BJ (cell line): ENCODE measurements at regions of chr14 and their contacts with region 1.

Region 1: GRCh38 chr14:22570132-22570949 is 18.7 kb downstream of the DAD1 start:
- DNase-seq: no peak
- H3K4me3 ChIP-seq: no peak overlapping the region
- H3K27me3 ChIP-seq: no peaks in the 10 kb centered on the region
- CTCF ChIP-seq: peak; percentile 66

Region 2: GRCh38 chr14:22556990-22557623 is 13.2 kb before region 1 on chr14:
- CTCF ChIA-PET with region 1: interaction called, 23 read pairs
- POLR2A ChIA-PET with region 1: no interaction called
- DNase-seq: no peak
- H3K4me3 ChIP-seq: peak overlapping the region; percentile 22
- H3K27me3 ChIP-seq: no peaks in the 10 kb centered on the region
- CTCF ChIP-seq: peak; percentile 96

Region 3: GRCh38 chr14:22589096-22589839 is 18.9 kb after region 1 on chr14 and contains the start of gene DAD1:
- CTCF ChIA-PET with region 1: interaction called, 15 read pairs
- POLR2A ChIA-PET with region 1: no interaction called
- DNase-seq: peak; percentile 99
- H3K4me3 ChIP-seq: peak within 1 kb of the TSS; percentile 63
- H3K27me3 ChIP-seq: peaks cover 6% of the 10 kb centered on the region
- CTCF ChIP-seq: no peak
- polyA plus RNA-seq, gene DAD1: 383 and 576 TPM in 2 replicates

Region 4: GRCh38 chr14:22646570-22647254 is 76.4 kb after region 1 on chr14:
- CTCF ChIA-PET with region 1: interaction called, 115 read pairs
- POLR2A ChIA-PET with region 1: no interaction called
- DNase-seq: peak; percentile 78
- H3K4me3 ChIP-seq: no peak overlapping the region
- H3K27me3 ChIP-seq: no peaks in the 10 kb centered on the region
- CTCF ChIP-seq: no peak

Region 5: DNA sequence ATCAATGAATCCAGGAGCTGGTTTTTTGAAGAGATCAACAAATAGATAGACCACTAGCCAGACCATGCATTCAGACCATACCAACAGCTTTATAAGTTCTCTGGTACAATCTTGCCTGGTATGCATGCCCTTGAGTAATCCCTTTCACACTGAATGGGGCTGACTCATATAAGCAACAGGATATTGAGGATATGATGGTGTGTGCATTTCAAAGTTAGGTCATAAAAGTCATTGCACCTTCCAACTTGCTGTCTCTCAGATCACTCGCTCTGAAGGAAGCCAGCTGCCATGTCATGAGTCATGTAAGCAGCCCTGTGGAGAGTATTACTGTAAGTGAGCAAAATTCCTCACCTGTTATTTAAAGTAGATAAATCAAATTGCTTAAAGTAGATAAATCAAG is 118.8 kb after region 1 on chr14:
- CTCF ChIA-PET with region 1: interaction called, 12 read pairs
- POLR2A ChIA-PET with region 1: no interaction called
- DNase-seq: peak; percentile 58
- H3K4me3 ChIP-seq: no peak overlapping the region
- H3K27me3 ChIP-seq: no peaks in the 10 kb centered on the region; the same call in none of the 2 replicates
- CTCF ChIP-seq: no peak